Caki2 (cell line): ENCODE measurements at regions of chr6 and their contacts with region 1.

Region 1: DNA sequence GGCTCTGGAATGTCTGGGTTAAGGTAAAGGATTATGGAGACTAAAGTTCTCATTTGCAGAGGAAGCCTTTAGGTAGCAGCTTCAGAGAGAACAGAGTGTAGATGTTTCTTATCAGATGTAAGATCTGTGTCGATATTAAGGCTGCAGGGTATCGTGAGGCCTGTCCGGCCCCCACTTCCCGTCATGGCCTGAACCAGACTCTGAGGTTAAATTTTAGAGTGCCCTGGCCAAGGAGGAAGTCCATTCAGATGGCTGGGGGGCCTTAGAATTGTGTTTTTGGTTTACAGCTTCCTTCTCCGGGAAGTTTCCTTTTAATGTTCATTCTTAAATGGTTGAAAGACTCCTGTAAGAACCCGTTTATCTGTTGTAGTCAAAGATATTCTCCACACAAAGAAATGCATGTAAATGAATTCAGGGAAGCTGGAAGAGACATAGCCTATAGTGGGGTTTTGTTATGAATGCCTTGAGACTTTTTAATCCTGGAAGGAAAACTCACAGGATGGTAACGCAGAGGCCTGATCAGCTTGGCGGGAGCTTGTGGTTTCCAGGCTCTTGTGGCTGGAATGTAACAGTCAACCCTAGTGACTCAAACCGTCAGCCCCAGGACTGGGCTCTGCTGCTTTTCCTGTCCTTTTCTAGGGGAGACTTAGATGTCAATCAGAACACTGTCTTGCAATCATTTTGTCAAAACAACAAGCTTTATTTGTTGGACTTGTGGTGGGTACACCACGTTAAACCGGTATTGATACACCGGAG is 34.7 kb downstream of the KIF25 start:
- DNase-seq: peak; percentile 24

Region 2: DNA sequence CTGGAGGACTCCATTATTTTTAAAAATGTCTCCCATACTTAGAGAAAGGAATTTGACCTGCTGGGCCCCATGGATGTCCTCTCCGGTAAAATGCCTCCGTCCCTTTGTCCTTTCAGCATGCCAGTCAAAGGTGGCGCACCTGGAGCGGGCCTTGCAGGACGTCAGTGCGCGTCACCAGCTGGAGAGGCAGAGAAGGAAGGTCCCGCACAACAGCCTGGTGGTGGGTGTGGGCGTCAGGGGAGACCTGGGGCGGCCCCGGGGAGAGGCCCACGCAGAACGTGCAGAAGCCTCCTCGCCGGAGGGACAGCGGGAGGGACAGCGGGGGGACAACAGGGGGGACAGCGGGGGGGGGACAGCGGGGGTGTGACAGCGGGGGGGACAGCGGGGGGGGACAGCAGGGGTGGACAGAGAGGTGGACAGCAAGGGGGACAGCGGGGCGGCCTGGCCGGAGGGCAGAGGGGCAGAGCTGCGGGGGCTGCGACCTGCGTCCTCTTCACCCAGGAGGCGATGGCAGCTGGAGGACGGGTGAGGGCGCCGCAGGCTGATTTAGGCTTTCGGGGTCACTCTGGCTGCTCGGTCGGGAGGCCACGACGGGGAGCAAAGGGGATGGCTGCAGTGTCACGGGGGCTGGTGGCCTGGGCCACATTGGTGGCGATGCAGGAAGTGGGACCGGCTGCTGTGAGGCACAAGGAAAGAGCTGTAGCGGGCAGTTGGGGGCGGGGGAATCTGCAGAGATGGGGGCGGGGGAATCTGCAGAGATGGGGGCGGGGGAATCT is 35.6 kb before region 1 on chr6:
- in situ Hi-C with region 1: loop called (anchors 5 kb)
- DNase-seq: no peak

Region 3: DNA sequence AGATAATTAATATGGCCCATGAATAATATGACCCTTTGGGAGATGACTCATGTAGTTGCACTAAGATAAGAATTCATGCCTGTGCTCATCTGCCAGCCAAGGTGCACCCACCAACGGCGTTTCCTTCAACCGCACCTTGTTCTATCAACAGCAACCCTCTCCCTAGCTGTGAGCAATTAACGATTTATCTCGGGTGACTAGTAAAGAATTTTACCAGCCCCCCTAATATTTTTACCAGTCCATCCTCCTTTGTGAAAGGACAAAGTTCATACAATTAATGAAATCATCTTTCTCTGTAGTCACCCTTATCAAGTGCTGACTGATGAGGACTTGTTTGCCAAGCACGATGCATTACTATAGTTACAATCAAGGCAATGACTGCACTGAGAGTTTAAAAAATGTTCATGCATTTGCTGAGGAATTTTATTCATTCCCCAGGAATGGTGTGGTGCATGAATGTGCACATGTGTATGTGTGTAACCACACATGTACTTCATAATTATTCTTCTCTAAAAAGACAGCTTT is 527.5 kb after region 1 on chr6:
- in situ Hi-C with region 1: no loop called
- DNase-seq: no peak